Posterior vena cava (tissue), 2 donors: ENCODE measurements at regions of chr9 and their contacts with region 1.

Region 1: GRCh38 chr9:123724211-123724796 is 205.6 kb downstream of the DENND1A start:
- DNase-seq: no peak

Region 2: GRCh38 chr9:123438321-123438720 is 286.0 kb before region 1 on chr9:
- intact Hi-C with region 1: no loop called
- DNase-seq: no peak

Region 3: GRCh38 chr9:123753669-123754258 is 29.5 kb after region 1 on chr9:
- intact Hi-C with region 1: loop called in 1 of 2 experiments (anchors 1 kb)
- DNase-seq: no peak

Region 4: DNA sequence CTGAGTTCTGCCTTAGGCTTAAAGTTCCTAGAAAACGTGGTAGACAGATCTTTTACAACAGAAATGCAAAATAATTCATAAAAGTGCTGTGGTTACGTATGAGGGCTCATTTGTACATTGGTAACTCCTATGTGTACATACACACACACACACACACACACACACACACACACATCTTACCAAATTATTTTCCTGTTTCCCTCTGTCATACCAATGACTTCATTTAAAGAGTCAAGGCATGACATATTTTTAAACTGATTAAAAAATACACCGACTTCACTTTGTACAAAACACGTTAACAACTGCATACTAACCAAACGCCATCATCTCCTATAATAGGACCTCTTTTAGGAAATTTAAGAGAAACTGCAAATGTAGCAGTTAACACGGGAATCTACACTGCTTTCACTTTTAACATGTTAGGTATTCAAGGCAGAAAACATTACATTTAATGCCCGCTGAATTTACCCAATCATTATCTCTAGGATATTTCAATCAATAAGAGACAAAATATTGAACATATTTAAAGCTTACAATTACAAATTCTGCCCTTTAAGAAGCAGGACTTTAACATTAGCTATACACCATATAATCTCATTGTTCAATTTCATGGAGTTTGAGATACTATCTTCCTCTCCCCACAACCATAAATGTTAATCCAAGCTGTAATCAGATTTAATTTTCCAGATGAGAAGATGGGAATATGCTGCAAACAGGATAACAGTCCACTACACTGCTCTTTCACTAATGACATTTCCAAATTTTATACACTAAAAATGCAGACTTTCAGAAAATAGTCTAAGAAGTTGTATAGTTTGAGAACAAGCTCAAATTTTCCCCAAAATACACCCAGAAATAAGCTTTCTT is 72.5 kb after region 1 on chr9:
- intact Hi-C with region 1: no loop called
- DNase-seq: no peak